HAP-1 (cell line): ENCODE measurements at regions of chr10 and their contacts with region 1.

Region 1: GRCh38 chr10:116674901-116675423 is 54.2 kb downstream of the PNLIPRP2 start:
- DNase-seq: no peak
- H3K4me3 ChIP-seq: no peak overlapping the region
- H3K4me1 ChIP-seq: no peaks in the 10 kb centered on the region
- H3K27me3 ChIP-seq: no peaks in the 10 kb centered on the region

Region 2: GRCh38 chr10:116470768-116471415 is 204.1 kb before region 1 on chr10:
- in situ Hi-C with region 1: no loop called
- DNase-seq: peak; percentile 15 to 56
- H3K4me3 ChIP-seq: no peak overlapping the region
- H3K4me1 ChIP-seq: no peaks in the 10 kb centered on the region
- H3K27me3 ChIP-seq: no peaks in the 10 kb centered on the region; the same call in 1 of the 2 replicates

Region 3: GRCh38 chr10:116783011-116783655 is 108.2 kb after region 1 on chr10:
- in situ Hi-C with region 1: loop called (anchors 5 kb)
- DNase-seq: no peak
- H3K4me3 ChIP-seq: no peak overlapping the region
- H3K4me1 ChIP-seq: no peaks in the 10 kb centered on the region
- H3K27me3 ChIP-seq: no peaks in the 10 kb centered on the region